PC-9 (cell line): ENCODE measurements at regions of chr3 and their contacts with region 1.

Region 1: GRCh38 chr3:56126632-56127031 is 341.6 kb downstream of the ERC2 start:
- DNase-seq: no peak
- H3K4me3 ChIP-seq: no peak overlapping the region
- H3K27ac ChIP-seq: no peak overlapping the region
- H3K4me1 ChIP-seq: peaks cover 8% of the 10 kb centered on the region
- H3K27me3 ChIP-seq: no peaks in the 10 kb centered on the region
- CTCF ChIP-seq: no peak

Region 2: GRCh38 chr3:56022619-56023018 is 104.0 kb before region 1 on chr3:
- CTCF ChIA-PET with region 1: no interaction called
- POLR2A ChIA-PET with region 1: interaction called, 29 read pairs
- intact Hi-C with region 1: no loop called
- DNase-seq: no peak
- H3K4me3 ChIP-seq: no peak overlapping the region
- H3K27ac ChIP-seq: no peak overlapping the region
- H3K4me1 ChIP-seq: no peaks in the 10 kb centered on the region
- H3K27me3 ChIP-seq: peaks cover 5% of the 10 kb centered on the region; the same call in 1 of the 2 replicates
- CTCF ChIP-seq: no peak

Region 3: DNA sequence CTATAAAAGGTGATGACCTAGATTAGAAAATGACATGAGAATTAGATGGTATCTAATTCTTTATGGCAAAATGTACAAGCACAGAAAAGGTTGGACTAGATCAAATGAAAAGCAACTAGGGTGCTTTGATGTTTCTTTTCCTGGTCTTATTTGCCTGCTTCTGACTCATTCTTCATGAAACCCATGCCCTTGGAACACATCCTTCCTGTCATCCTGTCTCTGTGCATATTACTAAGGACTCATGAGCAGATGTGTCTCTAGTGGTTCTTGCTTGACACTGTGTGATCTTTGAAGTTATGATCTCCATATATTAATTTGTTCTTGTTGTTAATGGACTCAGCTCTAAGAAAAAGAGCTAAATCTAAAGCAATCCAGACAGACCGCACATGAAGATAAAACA is 27.7 kb after region 1 on chr3:
- CTCF ChIA-PET with region 1: no interaction called
- POLR2A ChIA-PET with region 1: no interaction called
- intact Hi-C with region 1: no loop called
- DNase-seq: no peak
- H3K4me3 ChIP-seq: no peak overlapping the region
- H3K27ac ChIP-seq: no peak overlapping the region
- H3K4me1 ChIP-seq: no peaks in the 10 kb centered on the region
- H3K27me3 ChIP-seq: no peaks in the 10 kb centered on the region
- CTCF ChIP-seq: no peak

Region 4: DNA sequence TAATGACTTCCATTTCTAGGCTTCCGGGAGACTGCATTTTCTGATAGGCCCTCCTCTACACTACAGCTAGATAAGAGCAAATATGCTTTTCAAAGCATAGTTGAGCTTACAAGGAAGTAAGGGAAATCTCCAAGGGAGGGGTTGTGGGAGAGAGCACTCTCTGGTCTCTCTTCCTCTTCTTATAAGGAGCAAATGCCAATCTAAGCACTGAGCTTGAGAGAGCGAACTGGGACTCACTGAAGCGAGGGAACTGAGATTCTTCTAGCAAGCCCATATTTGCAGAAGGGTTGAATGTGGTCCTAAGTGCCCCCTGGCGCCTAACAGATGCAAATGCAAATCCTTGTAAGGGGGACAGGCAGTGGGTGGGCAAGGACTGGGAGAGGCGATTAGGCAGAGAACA is 176.9 kb after region 1 on chr3:
- CTCF ChIA-PET with region 1: no interaction called
- POLR2A ChIA-PET with region 1: no interaction called
- intact Hi-C with region 1: no loop called
- DNase-seq: peak in 1 of 2 experiments; percentile 4
- H3K4me3 ChIP-seq: no peak overlapping the region
- H3K27ac ChIP-seq: no peak overlapping the region
- H3K4me1 ChIP-seq: no peaks in the 10 kb centered on the region
- H3K27me3 ChIP-seq: peaks cover 16% of the 10 kb centered on the region; the same call in 1 of the 2 replicates
- CTCF ChIP-seq: peak; percentile 55